OCI-LY7 (cell line): ENCODE measurements at regions of chr3 and their contacts with region 1.

Region 1: GRCh38 chr3:121545574-121546455 is at the start of gene POLQ:
- DNase-seq: peak; percentile 96
- H3K4me3 ChIP-seq: peak within 1 kb of the TSS; percentile 93
- H3K27ac ChIP-seq: peak within 1 kb of the TSS; percentile 77
- H3K4me1 ChIP-seq: peaks cover 27% of the 10 kb centered on the region
- CTCF ChIP-seq: no peak
- total RNA-seq, gene POLQ: 58.2 and 61.1 TPM in 2 replicates

Region 2: GRCh38 chr3:121443456-121443855 is 102.4 kb before region 1 on chr3:
- CTCF ChIA-PET with region 1: no interaction called
- POLR2A ChIA-PET with region 1: no interaction called
- intact Hi-C with region 1: no loop called
- DNase-seq: no peak
- H3K4me3 ChIP-seq: no peak overlapping the region
- H3K27ac ChIP-seq: no peak overlapping the region
- H3K4me1 ChIP-seq: no peaks in the 10 kb centered on the region
- CTCF ChIP-seq: no peak

Region 3: DNA sequence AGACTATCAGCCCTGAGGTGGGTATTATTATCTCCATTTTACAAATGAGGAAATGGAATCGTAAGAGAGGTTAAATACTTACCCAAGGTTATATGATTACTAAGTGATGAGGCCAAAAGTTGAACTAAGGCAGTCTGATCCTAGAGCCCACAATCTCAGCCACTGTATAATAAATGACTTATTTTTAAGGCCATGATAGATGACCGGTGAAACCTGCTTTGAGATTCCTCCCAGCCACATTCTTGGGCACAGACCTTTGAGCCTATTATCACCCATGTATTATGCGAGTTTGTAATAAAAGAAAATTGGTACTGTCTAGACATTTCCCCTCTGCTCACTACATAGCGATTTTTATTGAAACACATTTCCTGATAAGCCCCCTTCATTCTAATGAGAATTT is 37.4 kb before region 1 on chr3:
- CTCF ChIA-PET with region 1: no interaction called
- POLR2A ChIA-PET with region 1: no interaction called
- intact Hi-C with region 1: no loop called
- DNase-seq: no peak
- H3K4me3 ChIP-seq: no peak overlapping the region
- H3K27ac ChIP-seq: no peak overlapping the region
- H3K4me1 ChIP-seq: no peaks in the 10 kb centered on the region
- CTCF ChIP-seq: no peak

Region 4: DNA sequence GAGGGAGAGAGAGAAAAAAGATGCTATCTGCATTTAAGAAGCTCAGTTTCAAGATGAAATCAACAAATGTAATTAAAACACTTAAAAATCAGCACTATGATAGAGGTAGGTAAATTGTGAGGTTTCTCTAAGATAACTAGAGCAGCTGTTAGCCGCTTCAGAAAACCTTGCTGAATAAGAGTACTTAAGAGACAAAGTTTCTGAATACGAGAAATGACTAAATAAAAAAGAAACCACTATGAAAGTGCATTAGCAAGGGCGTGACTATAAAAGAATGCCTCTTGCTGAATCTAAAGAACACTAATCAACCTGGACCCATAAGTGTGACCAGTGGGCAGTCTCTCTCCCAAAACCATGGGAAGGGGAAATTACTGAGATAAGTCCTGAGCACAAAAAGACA is 247.3 kb after region 1 on chr3:
- CTCF ChIA-PET with region 1: no interaction called
- POLR2A ChIA-PET with region 1: no interaction called
- intact Hi-C with region 1: loop called (anchors 5 kb)
- DNase-seq: peak; percentile 21
- H3K4me3 ChIP-seq: peak overlapping the region; percentile 49
- H3K27ac ChIP-seq: peak overlapping the region; percentile 91
- H3K4me1 ChIP-seq: peaks cover 55% of the 10 kb centered on the region
- CTCF ChIP-seq: no peak

Region 5: GRCh38 chr3:121995161-121996137 is 449.6 kb after region 1 on chr3:
- CTCF ChIA-PET with region 1: interaction called, 4 read pairs
- POLR2A ChIA-PET with region 1: interaction called, 3 read pairs
- intact Hi-C with region 1: loop called (anchors 1 kb)
- DNase-seq: peak; percentile 87
- H3K4me3 ChIP-seq: peak overlapping the region; percentile 25
- H3K27ac ChIP-seq: peak overlapping the region; percentile 98
- H3K4me1 ChIP-seq: peaks cover 98% of the 10 kb centered on the region
- CTCF ChIP-seq: peak; percentile 91

Region 6: DNA sequence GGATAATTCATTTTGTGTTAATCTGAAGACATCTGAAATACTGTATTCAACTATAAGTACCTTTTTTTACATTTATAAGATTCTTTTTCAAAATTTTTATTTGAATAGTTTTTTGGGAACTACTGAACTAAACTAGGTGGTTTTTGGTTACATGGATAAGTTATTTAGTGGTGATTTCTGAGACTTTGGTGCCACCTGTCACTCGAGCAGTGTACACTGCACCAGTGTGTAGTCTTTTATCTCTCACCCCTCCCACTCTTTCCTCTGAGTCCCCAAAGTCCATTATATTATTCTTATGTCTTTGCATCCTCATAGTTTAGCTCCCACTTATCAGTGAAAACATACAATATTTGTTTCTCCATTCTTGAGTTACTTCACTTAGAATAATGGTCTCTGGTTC is 566.9 kb after region 1 on chr3:
- CTCF ChIA-PET with region 1: no interaction called
- POLR2A ChIA-PET with region 1: no interaction called
- intact Hi-C with region 1: loop called (anchors 5 kb)
- DNase-seq: peak; percentile 49
- H3K4me3 ChIP-seq: no peak overlapping the region
- H3K27ac ChIP-seq: no peak overlapping the region
- H3K4me1 ChIP-seq: peaks cover 11% of the 10 kb centered on the region
- CTCF ChIP-seq: peak; percentile 70

Region 7: GRCh38 chr3:122299872-122300460 is 754.2 kb after region 1 on chr3:
- CTCF ChIA-PET with region 1: no interaction called
- POLR2A ChIA-PET with region 1: no interaction called
- intact Hi-C with region 1: loop called (anchors 2 kb)
- DNase-seq: peak; percentile 51
- H3K4me3 ChIP-seq: no peak overlapping the region
- H3K27ac ChIP-seq: no peak overlapping the region
- H3K4me1 ChIP-seq: peaks cover 9% of the 10 kb centered on the region
- CTCF ChIP-seq: peak; percentile 82

Region 8: GRCh38 chr3:122415720-122416654 is 870.2 kb after region 1 on chr3 and contains the start of gene WDR5B:
- CTCF ChIA-PET with region 1: no interaction called
- POLR2A ChIA-PET with region 1: no interaction called
- intact Hi-C with region 1: loop called (anchors 5 kb)
- DNase-seq: peak; percentile 98
- H3K4me3 ChIP-seq: peak within 1 kb of the TSS; percentile 85
- H3K27ac ChIP-seq: peak within 1 kb of the TSS; percentile 87
- H3K4me1 ChIP-seq: peaks cover 38% of the 10 kb centered on the region
- CTCF ChIP-seq: 0 out of 2 replicates have a peak, but pooled peaks have one; percentile 13
- total RNA-seq, gene WDR5B: 6.9 and 8.3 TPM in 2 replicates

Region 9: DNA sequence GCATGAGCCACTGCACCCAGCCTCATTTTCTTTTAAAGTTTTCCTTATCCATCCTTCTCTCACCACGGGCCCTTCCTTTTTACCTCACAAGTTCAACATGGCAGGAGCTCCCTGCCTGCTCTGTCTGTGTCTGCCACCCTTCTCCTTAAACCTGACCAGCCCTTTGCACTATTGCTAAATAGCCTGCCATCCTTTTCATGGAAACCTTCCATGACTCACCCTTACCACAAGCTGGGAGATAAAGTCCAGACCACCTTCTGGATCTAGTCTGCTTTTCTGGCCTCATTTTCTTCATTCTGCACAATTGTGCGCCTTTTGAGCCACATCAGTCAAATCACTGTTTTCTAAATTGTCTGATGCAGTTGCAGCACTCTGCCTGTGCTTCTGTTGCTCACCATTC is 1143.8 kb after region 1 on chr3:
- CTCF ChIA-PET with region 1: no interaction called
- POLR2A ChIA-PET with region 1: no interaction called
- intact Hi-C with region 1: no loop called
- DNase-seq: no peak
- H3K4me3 ChIP-seq: no peak overlapping the region
- H3K27ac ChIP-seq: no peak overlapping the region
- H3K4me1 ChIP-seq: no peaks in the 10 kb centered on the region
- CTCF ChIP-seq: no peak